ENCODE measurements at regions of chr1 and their contacts with region 1.

Region 1: GRCh38 chr1:198575798-198576641 is 35.5 kb upstream of the ATP6V1G3 start:
- H3K4me3 Mint-ChIP-seq: no peak overlapping the region
- H3K27ac Mint-ChIP-seq: peak overlapping the region; percentile 21
- H3K4me1 Mint-ChIP-seq: peaks cover 11% of the 10 kb centered on the region
- H3K27me3 Mint-ChIP-seq: no peaks in the 10 kb centered on the region

Region 2: GRCh38 chr1:198443374-198444233 is 132.4 kb before region 1 on chr1:
- intact Hi-C with region 1: no loop called
- H3K4me3 Mint-ChIP-seq: no peak overlapping the region
- H3K27ac Mint-ChIP-seq: no peak overlapping the region
- H3K4me1 Mint-ChIP-seq: peaks cover 12% of the 10 kb centered on the region
- H3K27me3 Mint-ChIP-seq: no peaks in the 10 kb centered on the region

Region 3: GRCh38 chr1:198543670-198544260 is 32.3 kb before region 1 on chr1:
- intact Hi-C with region 1: loop called (anchors 5 kb)
- H3K4me3 Mint-ChIP-seq: no peak overlapping the region
- H3K27ac Mint-ChIP-seq: peak overlapping the region; percentile 80
- H3K4me1 Mint-ChIP-seq: peaks cover 18% of the 10 kb centered on the region
- H3K27me3 Mint-ChIP-seq: no peaks in the 10 kb centered on the region

Measured in dendritic cell treated with granulocyte-macrophage colony-stimulating factor and Interleukin-4, amounts not matched to agents 40 ng/mL and 50 ng/mL, for 4 days (primary cell).